ENCODE measurements at regions of chr11 and their contacts with region 1.

Region 1: GRCh38 chr11:131760091-131761061 is 390.0 kb downstream of the NTM start:
- DNase-seq: peak in 1 of 2 experiments; percentile 63
- H3K4me3 ChIP-seq: no peak overlapping the region
- H3K27ac ChIP-seq: no peak overlapping the region
- H3K4me1 ChIP-seq: peaks cover 0 to 5% (median 0%) of the 10 kb centered on the region in 4 experiments; a peak in 2 of 7 replicates
- H3K27me3 ChIP-seq: no peaks in the 10 kb centered on the region
- CTCF ChIP-seq: peak; percentile 1 to 28 (median 20); a peak in 3 of 4 replicates
- EP300 ChIP-seq: no peak
- POLR2A ChIP-seq: no peak
- RAD21 ChIP-seq: peak; percentile 15 to 37; a peak in 3 of 4 replicates

Region 2: GRCh38 chr11:131770801-131771200 is 10.4 kb after region 1 on chr11:
- CTCF ChIA-PET with region 1: interaction called, 24 read pairs
- POLR2A ChIA-PET with region 1: no interaction called
- DNase-seq: no peak
- H3K4me3 ChIP-seq: no peak overlapping the region
- H3K27ac ChIP-seq: no peak overlapping the region
- H3K4me1 ChIP-seq: peaks cover 0 to 4% (median 0%) of the 10 kb centered on the region in 4 experiments; a peak in 3 of 7 replicates
- H3K27me3 ChIP-seq: no peaks in the 10 kb centered on the region
- CTCF ChIP-seq: no peak
- EP300 ChIP-seq: no peak
- POLR2A ChIP-seq: no peak
- RAD21 ChIP-seq: no peak

Measured in H1 (cell line).